CD4-positive, alpha-beta T cell (primary cell): ENCODE measurements at regions of chr12 and their contacts with region 1.

Region 1: GRCh38 chr12:9673404-9674225 is 4.1 kb downstream of the CLEC2D start:
- DNase-seq: peak in 10 of 14 experiments; percentile 18 to 79 (median 46)
- ATAC-seq: peak; percentile 38
- H3K4me3 ChIP-seq: peak overlapping the region; percentile 72
- H3K4me3 Mint-ChIP-seq: peak overlapping the region; percentile 87
- H3K27ac ChIP-seq: peak overlapping the region; percentile 77 to 88
- H3K27ac Mint-ChIP-seq: peak overlapping the region; percentile 90
- H3K4me1 ChIP-seq: peaks cover 37% of the 10 kb centered on the region
- H3K4me1 Mint-ChIP-seq: peaks cover 82% of the 10 kb centered on the region
- H3K27me3 ChIP-seq: no peaks in the 10 kb centered on the region
- H3K27me3 Mint-ChIP-seq: no peaks in the 10 kb centered on the region
- CTCF ChIP-seq: no peak

Region 2: GRCh38 chr12:9634177-9634803 is 39.3 kb before region 1 on chr12:
- CTCF ChIA-PET with region 1: no interaction called
- POLR2A ChIA-PET with region 1: interaction called, 6 read pairs
- intact Hi-C with region 1: loop called (anchors 1 to 5 kb)
- DNase-seq: peak; percentile 55 to 91 (median 78)
- ATAC-seq: peak; percentile 89
- H3K4me3 ChIP-seq: no peak overlapping the region
- H3K4me3 Mint-ChIP-seq: peak overlapping the region; percentile 79
- H3K27ac ChIP-seq: peak overlapping the region in 1 of 2 donors; percentile 37
- H3K27ac Mint-ChIP-seq: peak overlapping the region; percentile 77
- H3K4me1 ChIP-seq: peaks cover 45% of the 10 kb centered on the region
- H3K4me1 Mint-ChIP-seq: peaks cover 59% of the 10 kb centered on the region
- H3K27me3 ChIP-seq: no peaks in the 10 kb centered on the region
- H3K27me3 Mint-ChIP-seq: no peaks in the 10 kb centered on the region
- CTCF ChIP-seq: peak; percentile 87

Region 3: DNA sequence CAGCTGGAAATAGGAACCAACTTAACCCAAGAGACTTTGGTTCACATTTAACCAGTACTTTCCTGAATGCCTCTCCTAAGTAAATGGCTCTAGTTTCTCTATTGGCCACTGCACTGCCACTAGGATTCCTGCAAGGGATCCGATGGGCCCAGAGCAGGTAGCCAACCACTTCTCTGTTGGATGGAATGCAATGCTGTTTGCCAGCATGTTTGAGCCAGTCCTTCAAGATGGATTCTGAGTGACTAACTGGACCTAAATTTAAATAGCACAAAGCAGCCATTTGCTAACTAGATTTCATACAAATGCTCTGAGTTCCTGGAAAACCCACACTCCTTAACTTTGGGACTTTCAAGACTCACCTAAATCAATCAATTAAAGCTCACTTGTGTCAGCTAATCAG is 13.6 kb before region 1 on chr12:
- CTCF ChIA-PET with region 1: interaction called, 6 read pairs
- POLR2A ChIA-PET with region 1: interaction called, 648 read pairs
- intact Hi-C with region 1: no loop called
- DNase-seq: no peak
- ATAC-seq: no peak
- H3K4me3 ChIP-seq: no peak overlapping the region
- H3K4me3 Mint-ChIP-seq: peak overlapping the region; percentile 34
- H3K27ac ChIP-seq: peak overlapping the region in 1 of 2 donors; percentile 12
- H3K27ac Mint-ChIP-seq: peak overlapping the region; percentile 89
- H3K4me1 ChIP-seq: peaks cover 57% of the 10 kb centered on the region
- H3K4me1 Mint-ChIP-seq: peaks cover 98% of the 10 kb centered on the region
- H3K27me3 ChIP-seq: no peaks in the 10 kb centered on the region
- H3K27me3 Mint-ChIP-seq: no peaks in the 10 kb centered on the region
- CTCF ChIP-seq: no peak

Region 4: DNA sequence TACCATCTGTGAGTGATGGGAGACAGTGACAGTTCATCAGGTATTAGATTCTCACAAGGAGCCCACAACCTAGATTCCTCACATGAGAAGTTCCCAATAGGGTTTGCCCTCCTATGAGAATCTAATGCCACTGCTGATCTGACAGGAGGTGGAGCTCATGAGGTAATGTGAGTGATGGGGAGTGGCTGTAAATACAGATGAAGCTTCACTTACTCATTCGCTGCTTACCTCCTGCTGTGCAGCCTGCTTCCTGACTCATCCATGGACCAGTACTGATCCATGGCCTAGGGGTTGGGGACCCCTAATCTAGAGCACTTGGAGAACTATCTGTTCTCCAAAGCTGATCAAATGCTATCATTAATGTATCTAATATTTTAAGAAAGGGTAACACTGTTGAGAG is 13.6 kb after region 1 on chr12:
- CTCF ChIA-PET with region 1: interaction called, 3 read pairs
- POLR2A ChIA-PET with region 1: interaction called, 13 read pairs
- intact Hi-C with region 1: loop called in 1 of 2 experiments (anchors 2 kb)
- DNase-seq: peak in 3 of 14 experiments; percentile 20 to 52 (median 45)
- ATAC-seq: peak; percentile 39
- H3K4me3 ChIP-seq: no peak overlapping the region
- H3K4me3 Mint-ChIP-seq: peak overlapping the region; percentile 7
- H3K27ac ChIP-seq: peak overlapping the region in 1 of 2 donors; percentile 35
- H3K27ac Mint-ChIP-seq: peak overlapping the region; percentile 81
- H3K4me1 ChIP-seq: peaks cover 41% of the 10 kb centered on the region
- H3K4me1 Mint-ChIP-seq: peaks cover 73% of the 10 kb centered on the region
- H3K27me3 ChIP-seq: no peaks in the 10 kb centered on the region
- H3K27me3 Mint-ChIP-seq: no peaks in the 10 kb centered on the region
- CTCF ChIP-seq: no peak

Region 5: DNA sequence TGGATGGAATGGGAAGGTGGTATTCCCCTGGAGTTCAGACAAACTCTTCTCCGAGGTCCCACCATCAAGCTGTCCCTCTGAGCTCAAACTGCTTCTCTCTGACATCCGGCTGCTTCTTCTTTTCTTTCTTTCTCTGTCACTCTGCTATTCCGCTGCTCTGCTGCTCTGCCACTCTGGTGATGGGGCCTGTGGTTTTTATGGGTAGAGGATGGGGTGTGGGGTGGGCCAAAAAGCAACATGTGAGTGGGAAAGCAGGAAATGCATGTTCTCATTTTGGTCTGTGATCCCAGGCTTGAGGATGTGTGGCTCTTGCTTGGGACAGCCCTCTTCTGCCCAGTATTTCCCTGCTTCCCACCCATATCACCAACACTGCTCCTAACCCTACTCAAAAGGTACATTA is 28.6 kb after region 1 on chr12:
- CTCF ChIA-PET with region 1: no interaction called
- POLR2A ChIA-PET with region 1: interaction called, 36 read pairs
- intact Hi-C with region 1: loop called (anchors 5 kb)
- DNase-seq: peak in 12 of 14 experiments; percentile 28 to 89 (median 50)
- ATAC-seq: peak; percentile 71
- H3K4me3 ChIP-seq: peak overlapping the region; percentile 27
- H3K4me3 Mint-ChIP-seq: peak overlapping the region; percentile 69
- H3K27ac ChIP-seq: peak overlapping the region; percentile 55 to 77
- H3K27ac Mint-ChIP-seq: peak overlapping the region; percentile 90
- H3K4me1 ChIP-seq: peaks cover 24% of the 10 kb centered on the region
- H3K4me1 Mint-ChIP-seq: peaks cover 93% of the 10 kb centered on the region
- H3K27me3 ChIP-seq: no peaks in the 10 kb centered on the region
- H3K27me3 Mint-ChIP-seq: no peaks in the 10 kb centered on the region
- CTCF ChIP-seq: no peak

Region 6: GRCh38 chr12:9707864-9708808 is 34.5 kb after region 1 on chr12:
- CTCF ChIA-PET with region 1: interaction called, 10 read pairs
- POLR2A ChIA-PET with region 1: interaction called, 36 read pairs
- intact Hi-C with region 1: loop called (anchors 5 kb)
- DNase-seq: peak; percentile 45 to 87 (median 60)
- ATAC-seq: peak; percentile 85
- H3K4me3 ChIP-seq: peak overlapping the region; percentile 30
- H3K4me3 Mint-ChIP-seq: peak overlapping the region; percentile 79
- H3K27ac ChIP-seq: peak overlapping the region; percentile 68 to 71
- H3K27ac Mint-ChIP-seq: peak overlapping the region; percentile 89
- H3K4me1 ChIP-seq: peaks cover 23% of the 10 kb centered on the region
- H3K4me1 Mint-ChIP-seq: peaks cover 79% of the 10 kb centered on the region
- H3K27me3 ChIP-seq: no peaks in the 10 kb centered on the region
- H3K27me3 Mint-ChIP-seq: no peaks in the 10 kb centered on the region
- CTCF ChIP-seq: peak; percentile 74

Region 7: DNA sequence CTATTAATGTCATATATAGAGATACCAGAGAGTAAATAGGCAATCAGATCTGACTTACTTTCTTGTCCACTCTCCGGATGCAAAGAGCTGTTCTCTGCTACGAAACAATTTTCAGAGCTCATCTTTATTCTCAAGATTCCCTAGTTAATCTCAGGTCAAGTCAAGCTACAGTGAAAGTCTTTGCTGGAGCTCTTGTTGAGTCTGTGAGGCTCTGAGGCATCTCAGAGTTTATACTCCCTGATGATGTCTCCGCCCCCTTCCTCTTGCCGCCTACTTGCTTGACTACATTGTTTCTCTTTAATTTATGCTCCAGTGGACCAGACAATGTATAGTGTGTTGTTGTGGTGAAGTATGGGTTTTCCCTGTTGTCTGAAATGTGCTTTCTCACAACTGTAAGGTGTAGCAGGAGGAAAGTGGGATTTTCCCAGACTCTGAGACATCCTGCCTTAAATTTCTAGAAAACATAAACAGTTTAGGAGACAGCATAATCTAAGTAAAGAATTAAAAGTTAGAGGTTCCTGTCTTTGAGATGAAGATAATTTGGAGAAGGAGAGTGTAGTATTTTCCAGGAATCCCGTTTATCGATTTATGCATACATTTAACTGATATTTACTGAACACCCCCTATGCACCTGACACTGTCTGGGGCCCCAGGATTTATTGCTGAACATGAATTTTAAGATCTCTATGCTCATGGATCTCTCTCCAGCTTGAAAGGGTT is 87.2 kb after region 1 on chr12 and contains the start of gene CD69:
- CTCF ChIA-PET with region 1: interaction called, 4 read pairs
- POLR2A ChIA-PET with region 1: interaction called, 24 read pairs
- intact Hi-C with region 1: no loop called
- DNase-seq: peak; percentile 56 to 96 (median 69)
- ATAC-seq: peak; percentile 43
- H3K4me3 ChIP-seq: peak within 1 kb of the TSS; percentile 79
- H3K4me3 Mint-ChIP-seq: peak within 1 kb of the TSS; percentile 97
- H3K27ac ChIP-seq: peak within 1 kb of the TSS; percentile 98
- H3K27ac Mint-ChIP-seq: peak within 1 kb of the TSS; percentile 99
- H3K4me1 ChIP-seq: peaks cover 34% of the 10 kb centered on the region
- H3K4me1 Mint-ChIP-seq: peaks cover 68% of the 10 kb centered on the region
- H3K27me3 ChIP-seq: no peaks in the 10 kb centered on the region
- H3K27me3 Mint-ChIP-seq: no peaks in the 10 kb centered on the region
- CTCF ChIP-seq: no peak
- total RNA-seq, gene CD69: 631 to 659 TPM

Region 8: GRCh38 chr12:9880532-9881078 is 207.0 kb after region 1 on chr12:
- CTCF ChIA-PET with region 1: no interaction called
- POLR2A ChIA-PET with region 1: no interaction called
- intact Hi-C with region 1: no loop called
- DNase-seq: no peak
- ATAC-seq: no peak
- H3K4me3 ChIP-seq: no peak overlapping the region
- H3K4me3 Mint-ChIP-seq: no peak overlapping the region
- H3K27ac ChIP-seq: no peak overlapping the region
- H3K27ac Mint-ChIP-seq: no peak overlapping the region
- H3K4me1 ChIP-seq: no peaks in the 10 kb centered on the region
- H3K4me1 Mint-ChIP-seq: peaks cover 8% of the 10 kb centered on the region
- H3K27me3 ChIP-seq: no peaks in the 10 kb centered on the region
- H3K27me3 Mint-ChIP-seq: no peaks in the 10 kb centered on the region
- CTCF ChIP-seq: no peak

Region 9: DNA sequence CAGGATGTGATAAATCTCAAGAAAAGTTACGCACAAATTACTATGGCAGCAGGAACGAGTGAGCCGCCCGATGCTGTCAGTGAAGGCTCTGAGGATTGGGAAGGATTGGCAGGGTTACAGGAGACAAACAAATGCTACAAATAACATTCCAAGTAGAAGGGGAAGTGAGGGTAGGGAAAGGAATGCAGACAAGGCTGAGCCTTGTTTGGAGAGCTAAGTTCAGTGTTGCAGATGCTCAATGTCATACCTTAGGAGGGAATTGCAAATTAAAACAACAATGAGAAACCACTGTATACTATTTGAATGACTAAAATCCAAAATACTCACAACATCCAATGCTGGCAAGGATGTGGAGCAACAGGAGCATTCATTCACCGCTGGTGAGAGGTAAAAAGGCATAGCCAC is 358.2 kb after region 1 on chr12:
- CTCF ChIA-PET with region 1: no interaction called
- POLR2A ChIA-PET with region 1: no interaction called
- intact Hi-C with region 1: no loop called
- DNase-seq: no peak
- ATAC-seq: no peak
- H3K4me3 ChIP-seq: no peak overlapping the region
- H3K4me3 Mint-ChIP-seq: no peak overlapping the region
- H3K27ac ChIP-seq: no peak overlapping the region
- H3K27ac Mint-ChIP-seq: no peak overlapping the region
- H3K4me1 ChIP-seq: no peaks in the 10 kb centered on the region
- H3K4me1 Mint-ChIP-seq: no peaks in the 10 kb centered on the region
- H3K27me3 ChIP-seq: peaks cover 0 to 3% of the 10 kb centered on the region in 2 experiments
- H3K27me3 Mint-ChIP-seq: no peaks in the 10 kb centered on the region
- CTCF ChIP-seq: no peak